GM12878 (cell line): ENCODE measurements at regions of chr17 and their contacts with region 1.

Region 1: GRCh38 chr17:41548844-41549595 is 20.9 kb upstream of the KRT19 start:
- DNase-seq: peak; percentile 12
- ATAC-seq: peak; percentile 95
- H3K4me3 ChIP-seq: no peak overlapping the region
- H3K27ac ChIP-seq: no peak overlapping the region
- H3K4me1 ChIP-seq: no peaks in the 10 kb centered on the region
- H3K27me3 ChIP-seq: no peaks in the 10 kb centered on the region; a peak in 2 of 4 replicates
- CTCF ChIP-seq: peak; percentile 86 to 93 (median 91)
- EP300 ChIP-seq: no peak
- POLR2A ChIP-seq: no peak
- RAD21 ChIP-seq: peak; percentile 73

Region 2: GRCh38 chr17:40803617-40804082 is 745.4 kb before region 1 on chr17:
- CTCF ChIA-PET with region 1: interaction called, 9 read pairs
- POLR2A ChIA-PET with region 1: no interaction called
- RAD21 ChIA-PET with region 1: no interaction called
- SMC1A ChIA-PET with region 1: no interaction called
- in situ Hi-C with region 1: no loop called
- intact Hi-C with region 1: loop called (anchors 2 kb)
- DNase-seq: no peak
- ATAC-seq: peak; percentile 97
- H3K4me3 ChIP-seq: no peak overlapping the region
- H3K27ac ChIP-seq: no peak overlapping the region
- H3K4me1 ChIP-seq: no peaks in the 10 kb centered on the region
- H3K27me3 ChIP-seq: peaks cover 7 to 10% of the 10 kb centered on the region in 2 experiments
- CTCF ChIP-seq: peak; percentile 84 to 90 (median 86)
- EP300 ChIP-seq: no peak
- POLR2A ChIP-seq: no peak
- RAD21 ChIP-seq: peak; percentile 91

Region 3: DNA sequence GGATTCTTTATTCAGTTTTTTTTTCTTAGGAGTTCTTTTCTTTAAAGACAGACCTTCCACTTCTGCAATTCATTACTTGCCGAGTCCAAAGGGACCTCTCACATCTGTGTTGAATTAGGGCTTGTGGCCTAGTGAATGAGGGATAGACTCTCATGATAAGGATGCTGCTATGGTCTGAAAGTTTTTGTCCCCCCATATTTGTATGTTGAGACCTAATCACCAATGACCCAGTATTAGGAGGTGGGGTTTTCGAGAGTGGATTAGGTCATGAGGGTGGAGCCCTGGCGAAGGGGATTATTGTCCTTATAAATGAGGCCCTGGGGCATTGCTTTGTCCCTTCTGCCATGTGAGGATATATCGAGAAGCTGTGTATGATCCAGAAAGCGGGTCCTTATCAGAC is 691.5 kb before region 1 on chr17:
- CTCF ChIA-PET with region 1: interaction called, 20 read pairs
- POLR2A ChIA-PET with region 1: no interaction called
- RAD21 ChIA-PET with region 1: interaction called, 6 read pairs
- SMC1A ChIA-PET with region 1: interaction called, 7 read pairs
- in situ Hi-C with region 1: no loop called
- intact Hi-C with region 1: loop called (anchors 2 kb)
- DNase-seq: no peak
- ATAC-seq: no peak
- H3K4me3 ChIP-seq: no peak overlapping the region
- H3K27ac ChIP-seq: no peak overlapping the region
- H3K4me1 ChIP-seq: no peaks in the 10 kb centered on the region
- H3K27me3 ChIP-seq: peaks cover 0 to 4% of the 10 kb centered on the region in 2 experiments; a peak in 3 of 4 replicates
- CTCF ChIP-seq: no peak
- EP300 ChIP-seq: no peak
- POLR2A ChIP-seq: no peak
- RAD21 ChIP-seq: no peak

Region 4: DNA sequence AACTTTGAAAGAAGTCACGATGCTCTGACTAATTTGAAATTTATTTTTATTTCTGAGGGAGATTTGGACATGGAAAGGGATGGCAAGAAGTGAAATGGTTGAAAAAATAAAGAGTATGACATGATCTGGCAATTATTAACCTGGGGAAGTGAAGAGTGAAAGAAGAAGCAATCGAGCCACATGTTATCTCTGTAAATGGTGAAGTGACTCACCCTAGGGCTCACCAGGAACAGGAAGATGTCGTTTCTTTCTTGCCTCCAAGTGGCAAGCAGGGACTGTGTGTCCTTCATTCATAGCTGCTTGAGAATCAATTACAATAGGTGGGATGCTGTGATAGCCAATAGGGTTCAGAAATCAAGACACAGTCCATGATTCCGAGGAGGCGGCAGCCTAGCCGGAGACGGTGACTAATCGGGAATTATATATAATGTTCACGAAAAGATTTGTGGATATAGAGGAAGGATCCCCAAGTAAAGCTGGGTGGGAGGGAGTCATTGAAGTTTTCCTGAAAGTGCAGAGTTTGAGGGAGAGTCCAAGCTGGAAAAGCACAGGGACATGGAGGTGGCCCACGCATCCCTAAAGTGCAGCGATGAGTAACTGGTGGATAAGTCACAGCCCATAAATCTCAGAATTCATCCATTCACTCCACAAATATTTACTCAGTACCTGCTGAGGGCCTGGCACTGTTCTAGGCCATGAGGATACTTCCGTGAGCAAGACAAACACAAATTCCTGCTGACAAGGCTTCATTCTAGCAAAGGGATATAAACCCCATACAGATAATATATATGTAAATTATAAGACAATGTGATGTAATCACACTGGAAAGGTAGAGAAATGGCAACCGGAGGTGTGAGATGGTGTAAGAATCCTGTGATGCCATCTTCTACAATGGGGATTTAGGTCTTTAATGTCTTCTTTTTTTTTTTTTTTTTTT is 645.6 kb before region 1 on chr17:
- CTCF ChIA-PET with region 1: interaction called, 27 read pairs
- POLR2A ChIA-PET with region 1: no interaction called
- RAD21 ChIA-PET with region 1: interaction called, 8 read pairs
- SMC1A ChIA-PET with region 1: interaction called, 4 read pairs
- in situ Hi-C with region 1: loop called (anchors 5 kb)
- intact Hi-C with region 1: no loop called
- DNase-seq: no peak
- ATAC-seq: peak; percentile 89
- H3K4me3 ChIP-seq: no peak overlapping the region
- H3K27ac ChIP-seq: no peak overlapping the region
- H3K4me1 ChIP-seq: no peaks in the 10 kb centered on the region
- H3K27me3 ChIP-seq: no peaks in the 10 kb centered on the region; a peak in 2 of 4 replicates
- CTCF ChIP-seq: no peak
- EP300 ChIP-seq: 0 out of 4 replicates have a peak, but pooled peaks of 1 of the 2 experiments have one; percentile 28
- POLR2A ChIP-seq: no peak
- RAD21 ChIP-seq: no peak

Region 5: GRCh38 chr17:40909351-40909750 is 639.7 kb before region 1 on chr17:
- CTCF ChIA-PET with region 1: interaction called, 27 read pairs
- POLR2A ChIA-PET with region 1: interaction called, 3 read pairs
- RAD21 ChIA-PET with region 1: interaction called, 8 read pairs
- SMC1A ChIA-PET with region 1: interaction called, 8 read pairs
- in situ Hi-C with region 1: loop called (anchors 5 kb)
- intact Hi-C with region 1: loop called (anchors 1 kb)
- DNase-seq: no peak
- ATAC-seq: peak; percentile 84
- H3K4me3 ChIP-seq: no peak overlapping the region
- H3K27ac ChIP-seq: no peak overlapping the region
- H3K4me1 ChIP-seq: 0 out of 2 replicates have a peak, but pooled peaks cover 2% of the 10 kb centered on the region
- H3K27me3 ChIP-seq: peaks cover 0 to 4% of the 10 kb centered on the region in 2 experiments; a peak in 1 of 4 replicates
- CTCF ChIP-seq: peak; percentile 56 to 72 (median 68)
- EP300 ChIP-seq: no peak
- POLR2A ChIP-seq: no peak
- RAD21 ChIP-seq: peak; percentile 79

Region 6: GRCh38 chr17:41559548-41559947 is 10.5 kb after region 1 on chr17:
- CTCF ChIA-PET with region 1: interaction called, 34 read pairs
- POLR2A ChIA-PET with region 1: no interaction called
- RAD21 ChIA-PET with region 1: interaction called, 3 read pairs
- SMC1A ChIA-PET with region 1: interaction called, 8 read pairs
- in situ Hi-C with region 1: no loop called
- intact Hi-C with region 1: no loop called
- DNase-seq: no peak
- ATAC-seq: no peak
- H3K4me3 ChIP-seq: no peak overlapping the region
- H3K27ac ChIP-seq: no peak overlapping the region
- H3K4me1 ChIP-seq: no peaks in the 10 kb centered on the region
- H3K27me3 ChIP-seq: peaks cover 0 to 4% of the 10 kb centered on the region in 2 experiments; a peak in 2 of 4 replicates
- CTCF ChIP-seq: no peak
- EP300 ChIP-seq: no peak
- POLR2A ChIP-seq: no peak
- RAD21 ChIP-seq: no peak

Region 7: GRCh38 chr17:41565338-41565737 is 16.3 kb after region 1 on chr17:
- CTCF ChIA-PET with region 1: interaction called, 34 read pairs
- POLR2A ChIA-PET with region 1: no interaction called
- RAD21 ChIA-PET with region 1: no interaction called
- SMC1A ChIA-PET with region 1: interaction called, 8 read pairs
- in situ Hi-C with region 1: no loop called
- intact Hi-C with region 1: no loop called
- DNase-seq: no peak
- ATAC-seq: no peak
- H3K4me3 ChIP-seq: no peak overlapping the region
- H3K27ac ChIP-seq: no peak overlapping the region
- H3K4me1 ChIP-seq: no peaks in the 10 kb centered on the region
- H3K27me3 ChIP-seq: peaks cover 0 to 3% of the 10 kb centered on the region in 2 experiments; a peak in 3 of 4 replicates
- CTCF ChIP-seq: no peak
- EP300 ChIP-seq: no peak
- POLR2A ChIP-seq: no peak
- RAD21 ChIP-seq: no peak

Region 8: GRCh38 chr17:41633556-41634199 is 84.7 kb after region 1 on chr17:
- CTCF ChIA-PET with region 1: no interaction called
- POLR2A ChIA-PET with region 1: no interaction called
- RAD21 ChIA-PET with region 1: no interaction called
- SMC1A ChIA-PET with region 1: no interaction called
- in situ Hi-C with region 1: no loop called
- intact Hi-C with region 1: no loop called
- DNase-seq: no peak
- ATAC-seq: peak; percentile 45
- H3K4me3 ChIP-seq: no peak overlapping the region
- H3K27ac ChIP-seq: no peak overlapping the region
- H3K4me1 ChIP-seq: no peaks in the 10 kb centered on the region
- H3K27me3 ChIP-seq: no peaks in the 10 kb centered on the region; a peak in 1 of 4 replicates
- CTCF ChIP-seq: no peak
- EP300 ChIP-seq: no peak
- POLR2A ChIP-seq: no peak
- RAD21 ChIP-seq: no peak